ENCODE measurements at regions of chr15 and their contacts with region 1.

Region 1: DNA sequence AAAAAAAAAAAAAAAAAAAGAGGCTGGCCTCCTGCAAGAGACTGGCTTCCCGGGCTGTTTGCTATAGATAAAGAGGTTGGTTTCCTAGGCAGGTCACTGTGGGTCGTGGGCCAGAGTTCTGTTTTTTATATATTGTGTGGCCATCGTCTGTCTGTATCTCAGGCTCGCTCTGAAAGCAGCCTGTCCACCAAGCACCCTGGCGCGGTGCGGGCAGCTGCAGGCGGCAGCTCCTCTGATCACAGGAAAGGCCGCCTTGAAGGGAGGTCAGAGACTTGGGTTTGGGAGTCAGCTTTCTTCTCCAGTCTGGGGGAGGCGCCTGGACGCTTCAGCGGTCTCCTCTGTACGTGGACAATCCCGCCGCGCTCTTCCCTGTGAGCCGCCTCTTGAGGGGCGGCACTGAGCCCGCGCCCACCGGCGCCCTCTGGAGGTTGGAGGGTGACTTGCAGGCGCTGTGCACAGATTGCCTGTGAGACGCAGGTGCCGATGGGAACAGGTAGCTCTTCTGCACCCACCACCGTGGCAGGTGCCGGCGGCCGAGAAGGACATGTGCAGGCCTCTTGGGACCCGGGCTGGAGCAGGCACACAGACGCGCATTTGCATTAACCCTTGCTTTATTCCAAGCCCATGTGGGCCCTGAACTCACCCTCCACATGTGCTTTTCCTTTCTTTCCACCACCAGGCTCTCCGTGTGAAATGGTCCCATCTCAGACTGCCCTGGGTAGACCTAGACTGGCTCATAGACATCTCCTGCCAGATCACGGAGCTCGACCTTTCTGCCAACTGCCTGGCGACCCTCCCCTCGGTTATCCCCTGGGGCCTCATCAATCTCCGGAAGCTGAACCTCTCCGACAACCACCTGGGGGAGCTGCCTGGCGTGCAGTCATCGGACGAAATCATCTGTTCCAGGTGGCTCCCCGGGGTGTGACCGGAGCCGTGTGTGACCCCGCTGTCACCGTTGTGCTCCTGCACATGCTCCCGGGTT is 89.3 kb downstream of the LRRK1 start:
- DNase-seq: peak; percentile 71 to 85 (median 82)
- H3K4me3 ChIP-seq: peak overlapping the region; percentile 11 to 92 (median 72)
- H3K27ac ChIP-seq: no peak overlapping the region
- H3K4me1 ChIP-seq: peaks cover 2 to 20% (median 14%) of the 10 kb centered on the region in 4 experiments
- H3K27me3 ChIP-seq: no peaks in the 10 kb centered on the region

Region 2: DNA sequence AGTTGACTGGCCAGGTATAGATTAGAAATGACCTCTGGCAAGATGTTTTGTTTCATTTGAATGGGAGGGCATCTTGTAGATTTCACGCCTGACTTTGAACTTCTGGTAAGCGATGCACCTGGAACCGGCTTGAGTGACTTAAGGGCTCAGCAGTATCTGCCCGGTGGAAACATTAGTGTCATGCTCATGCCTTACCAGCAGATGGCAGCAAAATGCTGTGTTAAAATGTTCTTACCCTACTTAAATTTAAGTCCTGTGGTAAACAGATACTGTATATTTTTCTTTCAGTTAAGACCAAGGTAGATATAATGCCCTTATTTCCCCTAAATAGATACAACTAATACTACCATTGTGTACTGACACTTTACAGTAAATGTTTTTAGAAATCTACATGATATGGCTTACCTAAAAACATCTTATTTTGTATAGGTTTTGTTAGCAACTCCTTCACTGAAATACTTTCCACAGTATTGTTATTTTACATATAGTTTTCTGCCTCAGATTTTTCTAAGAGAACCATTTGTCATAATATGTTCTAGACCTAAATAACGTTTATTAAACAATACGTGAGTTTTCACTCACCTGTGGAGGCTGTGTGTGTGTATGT is 380.6 kb before region 1 on chr15:
- CTCF ChIA-PET with region 1: interaction called, 23 read pairs
- POLR2A ChIA-PET with region 1: no interaction called
- DNase-seq: peak; percentile 78 to 88 (median 84)
- H3K4me3 ChIP-seq: no peak overlapping the region
- H3K27ac ChIP-seq: no peak overlapping the region
- H3K4me1 ChIP-seq: no peaks in the 10 kb centered on the region
- H3K27me3 ChIP-seq: no peaks in the 10 kb centered on the region

Region 3: GRCh38 chr15:100703032-100703578 is 305.3 kb before region 1 on chr15:
- CTCF ChIA-PET with region 1: no interaction called
- POLR2A ChIA-PET with region 1: no interaction called
- DNase-seq: no peak
- H3K4me3 ChIP-seq: no peak overlapping the region
- H3K27ac ChIP-seq: no peak overlapping the region
- H3K4me1 ChIP-seq: no peaks in the 10 kb centered on the region
- H3K27me3 ChIP-seq: peaks cover 0 to 7% (median 2%) of the 10 kb centered on the region in 5 experiments

Region 4: DNA sequence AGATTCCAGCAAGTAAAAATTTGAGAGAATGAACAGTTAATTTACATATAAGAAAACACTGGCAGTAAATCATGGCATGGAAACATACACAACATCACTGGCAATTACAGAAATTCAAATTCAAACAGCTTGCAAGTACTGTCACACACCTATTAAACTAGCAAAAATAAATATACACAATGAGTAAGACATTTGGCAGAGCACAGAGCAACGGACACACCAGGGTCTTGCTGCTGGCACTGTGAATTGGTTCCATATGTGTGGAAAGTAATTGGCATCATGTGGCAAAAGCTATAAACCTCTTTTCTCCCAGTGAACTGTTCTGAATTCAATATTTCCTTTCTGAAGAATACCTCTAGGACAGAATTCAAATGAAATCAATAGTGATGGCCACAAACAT is 11.0 kb before region 1 on chr15:
- CTCF ChIA-PET with region 1: interaction called, 27 read pairs
- POLR2A ChIA-PET with region 1: no interaction called
- DNase-seq: no peak
- H3K4me3 ChIP-seq: no peak overlapping the region
- H3K27ac ChIP-seq: no peak overlapping the region
- H3K4me1 ChIP-seq: peaks cover 0 to 3% (median 1%) of the 10 kb centered on the region in 4 experiments
- H3K27me3 ChIP-seq: no peaks in the 10 kb centered on the region

Region 5: GRCh38 chr15:101258238-101259144 is 250.0 kb after region 1 on chr15:
- CTCF ChIA-PET with region 1: interaction called, 133 read pairs
- POLR2A ChIA-PET with region 1: no interaction called
- DNase-seq: peak; percentile 74 to 81 (median 75)
- H3K4me3 ChIP-seq: no peak overlapping the region
- H3K27ac ChIP-seq: no peak overlapping the region
- H3K4me1 ChIP-seq: peaks cover 4 to 31% (median 24%) of the 10 kb centered on the region in 4 experiments
- H3K27me3 ChIP-seq: no peaks in the 10 kb centered on the region

Measured in common myeloid progenitor, CD34-positive (primary cell).